Right ventricle myocardium superior (tissue), 1 donor: ENCODE measurements at regions of chr5 and their contacts with region 1.

Region 1: DNA sequence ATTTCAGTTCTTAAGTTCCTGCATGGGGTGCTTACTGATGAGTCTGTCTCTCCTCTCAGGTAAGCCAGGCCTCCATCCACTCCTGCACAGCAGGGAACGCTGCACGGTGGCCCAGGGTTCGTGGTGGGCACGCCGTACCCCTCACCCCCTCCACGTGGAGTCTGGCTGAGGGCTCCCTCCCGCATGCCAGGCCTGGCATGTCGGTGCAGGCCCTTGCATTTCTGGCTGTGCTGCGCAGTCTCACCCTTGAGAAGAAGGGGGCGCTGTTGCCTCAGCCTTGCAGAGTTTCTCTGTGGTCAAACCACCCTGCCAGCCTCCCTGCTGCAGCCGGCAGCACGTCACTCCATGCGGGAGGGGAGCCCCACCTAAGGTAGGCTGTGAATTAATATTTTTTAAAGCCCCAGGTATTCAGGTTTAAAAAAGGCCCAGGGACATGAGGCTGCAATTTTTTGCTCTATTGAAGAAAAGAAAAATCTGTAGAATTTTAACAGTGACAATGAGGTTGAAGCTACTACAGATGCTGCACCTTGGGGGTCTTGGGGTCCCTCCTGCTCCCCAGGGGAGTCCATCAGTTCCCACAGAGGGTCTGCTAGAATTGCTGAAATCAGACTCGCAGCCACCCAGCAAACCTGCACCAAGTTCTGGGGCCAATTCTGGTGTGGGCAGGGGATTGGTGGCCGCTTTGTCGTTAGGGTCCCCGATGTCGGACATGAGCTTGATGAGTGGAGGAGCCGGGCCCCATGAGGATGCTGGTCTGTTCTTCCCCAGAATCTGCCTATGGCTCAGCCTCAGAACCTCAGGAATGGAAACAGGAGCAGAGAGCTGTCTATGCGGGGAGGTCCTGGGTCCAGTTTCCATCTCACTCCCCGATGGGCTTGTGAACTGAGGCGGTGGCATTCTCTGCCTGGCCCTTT is 52.6 kb downstream of the TENT4A start:
- DNase-seq: peak; percentile 84
- ATAC-seq: peak; percentile 86

Region 2: DNA sequence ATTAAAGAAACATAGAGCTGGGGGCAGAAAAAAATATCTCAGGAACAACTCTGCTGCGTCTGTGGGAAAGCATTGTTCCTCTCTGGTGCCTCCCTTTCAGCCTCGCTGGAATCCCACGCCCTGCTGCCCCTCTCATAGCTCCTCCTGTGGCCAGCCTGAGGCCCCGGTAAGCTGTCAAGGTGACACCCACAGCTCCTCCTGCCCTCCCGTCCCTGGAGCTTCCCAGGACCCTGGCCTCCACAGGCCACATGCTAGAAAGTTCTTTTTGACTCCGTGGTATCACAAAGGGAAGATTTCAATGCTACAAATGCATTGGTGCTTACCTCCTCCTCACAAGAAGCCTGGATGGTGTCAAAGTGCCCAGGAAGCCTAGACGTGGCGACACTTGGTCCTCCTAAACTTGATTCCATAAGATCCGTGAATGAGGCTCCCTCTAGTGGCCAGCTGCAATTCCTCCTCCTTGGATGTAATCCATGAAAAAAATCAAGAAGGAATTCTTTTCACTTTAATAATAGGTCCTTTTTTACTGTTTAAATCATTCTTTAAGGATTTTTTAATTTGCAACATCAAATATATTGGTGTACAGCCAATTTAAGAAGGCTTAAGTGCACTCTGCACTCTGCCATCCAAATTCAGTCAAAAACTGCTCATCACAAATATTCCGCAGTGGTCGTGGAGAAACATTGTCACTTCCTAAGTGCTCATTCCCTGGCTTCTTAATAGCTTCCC is 980.2 kb after region 1 on chr5:
- intact Hi-C with region 1: loop called (anchors 10 kb)
- DNase-seq: peak; percentile 61
- ATAC-seq: no peak